PC-9 (cell line): ENCODE measurements at regions of chr14 and their contacts with region 1.

Region 1: DNA sequence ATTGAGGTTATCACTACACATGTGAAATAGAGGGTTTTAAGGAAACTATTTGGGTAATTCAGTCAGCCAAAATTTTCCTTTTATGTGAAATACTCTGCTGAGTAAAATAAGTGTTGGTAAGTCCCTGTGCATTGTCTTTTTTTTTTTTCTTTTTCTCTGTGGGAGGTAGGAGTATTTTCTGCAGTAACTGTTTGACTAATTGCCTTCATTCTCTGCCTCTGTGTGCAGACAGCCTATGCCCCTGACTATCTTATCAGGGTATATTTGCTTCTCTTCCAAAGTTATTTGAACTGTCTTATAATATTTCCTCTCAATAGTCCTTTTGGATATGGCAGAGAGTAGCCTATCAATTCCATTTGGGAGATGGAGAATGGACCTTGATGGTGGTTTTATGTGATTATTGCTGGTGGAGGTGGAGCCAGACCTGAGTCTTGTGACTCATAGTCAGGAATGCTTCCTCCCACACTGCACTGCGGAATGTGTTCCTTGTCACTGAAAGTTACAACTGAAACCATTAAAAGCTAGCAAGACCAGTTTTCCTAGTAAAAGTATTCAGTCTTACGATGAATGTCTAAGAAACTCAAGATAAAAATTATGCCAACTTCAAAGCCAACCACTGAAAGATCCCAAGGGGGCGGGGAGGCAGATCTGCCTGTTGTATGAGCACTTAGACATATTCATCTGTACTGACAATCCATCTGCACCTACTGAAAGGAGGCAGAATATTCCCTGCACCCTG is 40.9 kb upstream of the STXBP6 start:
- DNase-seq: peak; percentile 71 to 86
- H3K4me3 ChIP-seq: no peak overlapping the region
- H3K27ac ChIP-seq: peak overlapping the region; percentile 44
- H3K4me1 ChIP-seq: peaks cover 4% of the 10 kb centered on the region; the same call in 1 of the 2 replicates
- H3K27me3 ChIP-seq: no peaks in the 10 kb centered on the region
- CTCF ChIP-seq: no peak

Region 2: GRCh38 chr14:25049568-25050268 is 41.2 kb before region 1 on chr14 and contains the start of gene STXBP6:
- CTCF ChIA-PET with region 1: no interaction called
- POLR2A ChIA-PET with region 1: no interaction called
- intact Hi-C with region 1: loop called (anchors 5 kb)
- DNase-seq: peak in 1 of 2 experiments; percentile 66
- H3K4me3 ChIP-seq: peak within 1 kb of the TSS; percentile 52
- H3K27ac ChIP-seq: no peak within 1 kb of the TSS
- H3K4me1 ChIP-seq: no peaks in the 10 kb centered on the region
- H3K27me3 ChIP-seq: peaks cover 33% of the 10 kb centered on the region
- CTCF ChIP-seq: no peak
- total RNA-seq, gene STXBP6: 10.0 and 12.3 TPM in 2 replicates